GM12878 (cell line): ENCODE measurements at regions of chrX and their contacts with region 1.

Region 1: DNA sequence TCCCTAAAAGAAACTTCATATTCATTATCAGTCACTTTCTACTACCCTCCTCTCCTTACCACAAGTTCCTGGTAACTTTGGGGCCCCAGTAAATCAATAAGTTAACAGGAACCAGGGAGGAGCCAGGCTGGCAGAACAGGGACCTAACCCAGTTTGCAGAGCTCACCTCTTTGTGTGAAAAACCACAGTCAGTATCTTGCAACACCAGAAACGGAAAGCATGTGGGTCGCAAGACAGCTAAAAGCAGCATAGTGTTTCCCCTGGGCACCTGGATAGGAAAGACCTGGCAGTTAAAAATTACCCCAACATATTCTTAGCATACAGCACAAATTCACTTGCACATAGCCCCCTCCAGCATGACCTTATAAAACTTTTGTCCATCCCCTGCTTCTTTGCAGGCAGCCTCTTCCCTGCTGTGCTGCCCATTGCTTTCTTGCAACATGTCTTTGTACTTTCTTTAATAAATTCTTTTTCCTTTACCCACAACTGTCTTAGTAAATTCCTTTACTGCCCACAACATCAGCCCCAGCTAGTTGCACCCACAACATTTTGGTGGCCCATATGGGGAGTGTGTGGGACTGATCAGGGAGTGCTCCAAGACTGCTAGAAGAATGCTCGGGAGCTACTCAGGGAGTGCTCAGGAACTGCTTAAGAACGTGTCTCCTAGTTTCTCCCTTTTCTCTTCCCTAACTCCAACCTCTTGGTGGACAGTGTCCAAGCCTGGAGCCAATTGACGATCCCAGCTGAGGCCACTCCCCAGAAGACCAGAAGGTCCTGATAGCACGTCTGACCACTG is 83.4 kb downstream of the MSN start:
- DNase-seq: peak; percentile 65
- ATAC-seq: peak; percentile 85
- H3K4me3 ChIP-seq: no peak overlapping the region
- H3K27ac ChIP-seq: no peak overlapping the region
- H3K4me1 ChIP-seq: peaks cover 7% of the 10 kb centered on the region
- H3K27me3 ChIP-seq: no peaks in the 10 kb centered on the region
- CTCF ChIP-seq: no peak
- EP300 ChIP-seq: no peak
- POLR2A ChIP-seq: no peak
- RAD21 ChIP-seq: no peak

Region 2: DNA sequence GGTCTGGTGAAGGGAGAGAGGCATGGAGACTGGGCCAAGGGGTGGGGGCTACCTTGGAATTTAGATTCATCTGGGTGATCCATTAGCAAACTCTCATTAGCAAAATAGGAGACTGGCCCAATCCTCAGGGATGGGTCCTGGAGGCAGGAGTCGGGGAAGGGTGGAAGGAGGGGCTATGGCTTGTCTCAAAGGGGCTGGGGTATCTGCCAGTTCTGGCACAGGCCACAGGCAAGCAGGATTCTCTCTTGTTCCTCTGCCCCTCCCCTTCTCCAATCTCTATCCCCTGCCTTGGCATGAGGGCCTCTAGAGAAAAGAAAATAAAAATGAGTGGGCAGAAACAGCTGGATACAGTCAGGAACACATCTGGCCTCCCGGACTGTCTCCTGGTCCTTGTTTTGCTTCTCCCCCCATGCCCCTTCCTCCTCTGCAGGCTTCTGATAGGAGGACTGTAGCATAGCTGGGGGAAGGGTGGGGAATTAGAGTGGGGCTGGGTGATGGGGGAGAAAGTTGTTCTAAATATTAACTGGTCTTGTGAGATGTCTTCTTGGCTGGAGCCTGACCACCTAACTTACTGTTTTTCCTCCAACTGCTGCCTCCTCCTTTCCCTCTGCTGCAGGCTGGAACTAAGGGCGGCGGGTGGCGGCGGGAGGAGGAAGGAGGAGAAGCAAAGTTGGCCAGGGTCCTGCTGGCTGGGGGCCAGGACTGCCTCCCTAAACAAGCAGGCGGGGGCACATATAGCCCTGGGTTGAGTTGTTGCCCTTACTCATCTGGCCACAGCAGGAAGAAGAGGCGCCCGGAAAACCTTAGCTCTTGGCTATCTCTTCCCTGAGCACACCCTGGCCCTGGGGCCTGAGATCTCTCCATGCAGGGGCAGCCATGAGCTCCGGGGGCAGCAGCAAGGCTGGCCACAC is 163.0 kb before region 1 on chrX:
- CTCF ChIA-PET with region 1: no interaction called
- POLR2A ChIA-PET with region 1: no interaction called
- RAD21 ChIA-PET with region 1: no interaction called
- SMC1A ChIA-PET with region 1: no interaction called
- in situ Hi-C with region 1: no loop called
- intact Hi-C with region 1: no loop called
- DNase-seq: no peak
- ATAC-seq: no peak
- H3K4me3 ChIP-seq: no peak overlapping the region
- H3K27ac ChIP-seq: no peak overlapping the region
- H3K4me1 ChIP-seq: peaks cover 5% of the 10 kb centered on the region; the same call in 1 of the 2 replicates
- H3K27me3 ChIP-seq: no peaks in the 10 kb centered on the region
- CTCF ChIP-seq: no peak
- EP300 ChIP-seq: no peak
- POLR2A ChIP-seq: no peak
- RAD21 ChIP-seq: no peak

Region 3: GRCh38 chrX:65783746-65784145 is 32.9 kb after region 1 on chrX:
- CTCF ChIA-PET with region 1: no interaction called
- POLR2A ChIA-PET with region 1: no interaction called
- RAD21 ChIA-PET with region 1: no interaction called
- SMC1A ChIA-PET with region 1: no interaction called
- in situ Hi-C with region 1: no loop called
- intact Hi-C with region 1: no loop called
- DNase-seq: no peak
- ATAC-seq: no peak
- H3K4me3 ChIP-seq: no peak overlapping the region
- H3K27ac ChIP-seq: no peak overlapping the region
- H3K4me1 ChIP-seq: no peaks in the 10 kb centered on the region
- H3K27me3 ChIP-seq: no peaks in the 10 kb centered on the region
- CTCF ChIP-seq: no peak
- EP300 ChIP-seq: no peak
- POLR2A ChIP-seq: no peak
- RAD21 ChIP-seq: no peak

Region 4: DNA sequence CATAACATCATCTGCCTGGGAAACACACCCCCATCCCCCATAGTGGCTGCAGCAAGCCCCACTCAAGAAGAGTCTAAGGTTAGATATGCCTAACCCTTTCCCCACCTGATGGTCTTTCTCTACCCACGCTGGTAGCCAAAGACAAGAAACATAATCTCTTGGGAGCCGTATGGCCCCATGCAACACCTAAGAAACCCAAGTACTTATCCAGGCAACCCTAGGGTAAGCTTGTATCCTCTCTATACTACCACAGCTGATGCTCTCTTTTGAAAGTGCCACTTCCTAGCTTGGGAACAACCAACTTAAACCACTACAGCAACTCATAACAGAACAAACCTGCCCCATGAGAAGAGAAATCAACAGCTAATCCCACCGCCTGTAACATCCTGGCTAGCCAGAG is 77.7 kb after region 1 on chrX:
- CTCF ChIA-PET with region 1: no interaction called
- POLR2A ChIA-PET with region 1: no interaction called
- RAD21 ChIA-PET with region 1: no interaction called
- SMC1A ChIA-PET with region 1: interaction called, 3 read pairs
- in situ Hi-C with region 1: no loop called
- intact Hi-C with region 1: loop called (anchors 5 kb)
- DNase-seq: no peak
- ATAC-seq: no peak; the same call in 2 of the 3 replicates
- H3K4me3 ChIP-seq: no peak overlapping the region
- H3K27ac ChIP-seq: no peak overlapping the region
- H3K4me1 ChIP-seq: no peaks in the 10 kb centered on the region
- H3K27me3 ChIP-seq: no peaks in the 10 kb centered on the region
- CTCF ChIP-seq: no peak
- EP300 ChIP-seq: no peak
- POLR2A ChIP-seq: no peak
- RAD21 ChIP-seq: no peak

Region 5: DNA sequence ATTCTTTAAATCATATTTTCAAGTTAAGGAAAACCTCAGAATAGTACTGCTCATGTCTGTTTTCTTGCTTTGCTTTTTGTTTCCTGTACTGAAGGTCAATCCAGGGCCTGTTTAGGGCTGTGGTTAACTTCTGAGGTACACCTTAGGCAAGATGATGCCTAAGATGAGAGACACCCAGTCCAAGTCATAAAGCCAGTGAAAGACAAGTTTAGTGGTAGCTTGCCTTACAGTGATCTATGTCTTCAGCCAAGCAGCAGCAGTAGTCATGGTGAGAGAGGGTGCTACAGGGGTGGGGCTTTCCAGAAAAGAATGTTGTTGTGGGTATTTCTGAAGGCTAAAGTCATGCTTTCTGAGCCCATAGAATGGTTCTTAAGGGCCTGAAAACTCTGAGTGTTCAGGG is 115.3 kb after region 1 on chrX:
- CTCF ChIA-PET with region 1: no interaction called
- POLR2A ChIA-PET with region 1: no interaction called
- RAD21 ChIA-PET with region 1: no interaction called
- SMC1A ChIA-PET with region 1: interaction called, 8 read pairs
- in situ Hi-C with region 1: no loop called
- intact Hi-C with region 1: loop called (anchors 1 kb)
- DNase-seq: peak; percentile 55
- ATAC-seq: peak; percentile 95
- H3K4me3 ChIP-seq: no peak overlapping the region
- H3K27ac ChIP-seq: no peak overlapping the region
- H3K4me1 ChIP-seq: no peaks in the 10 kb centered on the region; the same call in 1 of the 2 replicates
- H3K27me3 ChIP-seq: no peaks in the 10 kb centered on the region
- CTCF ChIP-seq: no peak
- EP300 ChIP-seq: no peak
- POLR2A ChIP-seq: no peak
- RAD21 ChIP-seq: no peak